ENCODE measurements at regions of chr12 and their contacts with region 1.

Region 1: GRCh38 chr12:121668750-121669520 is 519 bp downstream of the MORN3 start:
- DNase-seq: no peak
- H3K4me3 ChIP-seq: no peak overlapping the region
- CTCF ChIP-seq: peak; percentile 61

Region 2: DNA sequence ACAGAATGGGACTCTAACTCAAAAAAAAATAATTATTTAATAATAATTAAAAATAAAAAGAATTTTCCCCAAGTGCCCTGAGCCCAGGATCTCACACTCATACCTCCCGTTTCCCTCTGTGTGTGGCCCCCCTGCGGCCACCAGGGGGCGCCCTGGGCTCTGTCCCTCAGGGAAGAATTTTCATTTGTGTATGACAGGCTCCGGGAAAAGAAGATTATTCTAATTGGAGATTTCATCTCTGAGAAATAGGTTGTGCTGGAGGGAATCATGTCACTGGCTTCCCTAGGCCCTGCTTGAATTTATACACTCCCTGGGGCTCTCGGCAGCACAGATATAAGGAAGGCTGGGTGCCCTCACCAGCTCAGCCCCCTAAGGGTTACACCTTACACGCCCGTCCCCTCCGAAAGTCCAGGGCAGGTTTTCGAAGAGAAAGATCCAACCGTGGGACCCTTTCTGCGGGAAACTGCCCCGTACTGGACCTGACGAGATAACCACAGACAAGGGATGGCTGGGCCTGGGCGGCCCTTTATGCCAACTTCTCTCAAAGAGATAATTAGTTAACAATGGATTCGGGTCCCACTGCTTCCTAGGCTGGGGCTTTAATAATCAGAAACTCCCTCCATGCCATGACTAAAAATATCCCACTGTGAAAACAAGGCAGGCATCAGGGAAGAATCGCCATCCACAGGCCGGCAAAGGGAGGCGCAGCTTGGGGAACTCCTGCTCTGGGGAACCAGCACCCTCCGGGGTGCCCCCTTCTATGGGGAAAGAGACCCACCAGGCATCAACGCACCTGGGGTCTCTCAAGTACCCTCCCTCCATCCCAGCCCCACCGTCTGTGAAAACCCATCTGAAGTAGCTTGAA is 168.8 kb before region 1 on chr12:
- CTCF ChIA-PET with region 1: interaction called, 114 read pairs
- POLR2A ChIA-PET with region 1: no interaction called
- DNase-seq: no peak
- H3K4me3 ChIP-seq: no peak overlapping the region
- CTCF ChIP-seq: peak; percentile 89

Region 3: GRCh38 chr12:121568971-121569751 is 99.8 kb before region 1 on chr12:
- CTCF ChIA-PET with region 1: interaction called, 10 read pairs
- POLR2A ChIA-PET with region 1: no interaction called
- DNase-seq: no peak
- H3K4me3 ChIP-seq: no peak overlapping the region
- CTCF ChIP-seq: no peak

Region 4: GRCh38 chr12:121626087-121626852 is 42.7 kb before region 1 on chr12 and contains the start of gene ORAI1:
- CTCF ChIA-PET with region 1: interaction called, 14 read pairs
- POLR2A ChIA-PET with region 1: no interaction called
- DNase-seq: peak; percentile 16
- H3K4me3 ChIP-seq: peak within 1 kb of the TSS; percentile 69
- CTCF ChIP-seq: peak; percentile 27

Region 5: DNA sequence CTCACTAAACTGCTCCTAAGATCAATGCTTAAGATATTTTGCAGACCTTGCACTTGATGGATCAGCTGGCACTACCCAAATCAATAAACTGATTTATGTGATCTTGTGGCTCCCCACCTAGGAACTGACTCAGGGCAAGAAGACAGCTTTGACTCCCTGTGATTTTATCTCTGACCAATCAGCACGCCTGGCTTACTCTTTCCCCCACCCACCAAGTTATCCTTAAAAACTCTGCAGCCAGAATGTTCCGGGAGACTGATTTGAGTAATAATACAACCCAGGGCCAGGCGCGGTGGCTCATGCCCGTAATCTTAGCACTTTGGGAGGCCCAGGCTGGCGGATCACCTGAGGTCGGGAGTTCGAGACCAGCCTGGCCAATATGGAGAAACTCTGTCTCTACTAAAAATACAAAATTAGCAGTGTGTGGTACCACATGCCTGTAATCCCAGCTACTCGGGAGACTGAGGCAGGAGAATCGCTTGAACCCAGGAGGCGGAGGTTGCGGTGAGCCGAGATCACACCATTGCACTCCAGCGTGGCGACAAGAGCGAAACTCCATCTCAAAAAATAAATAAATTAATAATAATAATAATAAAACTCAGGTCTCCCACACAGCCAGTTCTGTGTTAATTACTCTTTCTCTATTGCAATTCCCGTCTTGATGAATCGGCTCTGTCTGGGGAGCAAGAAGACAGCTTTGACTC is 11.5 kb before region 1 on chr12:
- CTCF ChIA-PET with region 1: interaction called, 13 read pairs
- POLR2A ChIA-PET with region 1: no interaction called
- DNase-seq: no peak
- H3K4me3 ChIP-seq: no peak overlapping the region
- CTCF ChIP-seq: no peak